ENCODE measurements at regions of chr2 and their contacts with region 1.

Region 1: GRCh38 chr2:104443145-104443544 is 410.8 kb upstream of the POU3F3 start:
- H3K4me3 Mint-ChIP-seq: no peak overlapping the region
- H3K27ac Mint-ChIP-seq: no peak overlapping the region
- H3K4me1 Mint-ChIP-seq: peaks cover 9% of the 10 kb centered on the region
- H3K27me3 Mint-ChIP-seq: peaks cover 4% of the 10 kb centered on the region

Region 2: GRCh38 chr2:104849618-104850141 is 406.5 kb after region 1 on chr2:
- intact Hi-C with region 1: loop called (anchors 1 kb)
- H3K4me3 Mint-ChIP-seq: no peak overlapping the region
- H3K27ac Mint-ChIP-seq: no peak overlapping the region
- H3K4me1 Mint-ChIP-seq: peaks cover 70% of the 10 kb centered on the region
- H3K27me3 Mint-ChIP-seq: peaks cover 97% of the 10 kb centered on the region

Measured in dendritic cell treated with granulocyte-macrophage colony-stimulating factor and Interleukin-4, amounts not matched to agents 40 ng/mL and 50 ng/mL, for 4 days (primary cell).